ENCODE measurements at regions of chr12 and their contacts with region 1.

Region 1: DNA sequence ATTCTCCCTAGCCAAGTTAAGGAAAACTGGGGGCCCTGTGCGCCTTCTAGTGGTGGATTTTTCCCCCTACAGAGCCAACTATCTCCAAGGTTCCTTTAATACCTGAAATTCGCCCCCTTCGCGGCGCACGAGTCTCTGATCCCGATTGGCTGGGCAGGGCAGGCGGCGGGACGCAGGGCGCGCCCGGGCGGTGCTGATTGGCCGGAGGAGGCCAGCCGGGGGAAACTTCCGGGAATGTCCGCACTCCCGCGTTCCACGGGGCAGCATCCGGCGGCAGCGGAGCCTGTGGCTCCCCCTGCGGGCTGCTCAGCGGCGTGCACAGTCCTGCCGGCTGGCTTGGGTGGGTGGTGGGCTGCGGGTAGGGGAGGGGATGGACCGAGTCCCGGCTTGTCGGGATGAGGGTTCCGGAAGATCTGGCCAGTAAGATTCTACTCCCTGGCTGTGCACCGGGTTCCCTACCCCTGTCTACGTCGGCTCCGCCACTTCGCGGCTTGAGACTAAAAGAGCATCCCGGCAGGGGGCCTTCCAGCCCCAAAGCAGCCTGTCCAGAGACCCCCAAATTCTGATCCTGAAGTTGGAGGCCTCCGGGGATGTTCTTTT is at the start of gene NABP2:
- DNase-seq: peak; percentile 95 to 98
- H3K4me3 ChIP-seq: peak within 1 kb of the TSS; percentile 49 to 78 (median 66)
- H3K27ac ChIP-seq: peak within 1 kb of the TSS; percentile 59; the same call in 1 of the 2 replicates
- H3K4me1 ChIP-seq: peaks cover 3 to 13% (median 6%) of the 10 kb centered on the region in 4 experiments; a peak in 6 of 7 replicates
- H3K27me3 ChIP-seq: no peaks in the 10 kb centered on the region
- CTCF ChIP-seq: peak; percentile 70 to 79 (median 78)
- EP300 ChIP-seq: no peak
- POLR2A ChIP-seq: no peak
- RAD21 ChIP-seq: peak; percentile 39
- total RNA-seq, gene NABP2: 56.1 and 58.1 TPM in 2 replicates

Region 2: GRCh38 chr12:56127888-56128669 is 96.1 kb before region 1 on chr12 and contains the start of gene ESYT1:
- CTCF ChIA-PET with region 1: interaction called, 13 read pairs
- POLR2A ChIA-PET with region 1: interaction called, 21 read pairs
- DNase-seq: peak; percentile 97 to 100
- H3K4me3 ChIP-seq: peak within 1 kb of the TSS; percentile 79 to 95 (median 90)
- H3K27ac ChIP-seq: peak within 1 kb of the TSS; percentile 88
- H3K4me1 ChIP-seq: peaks cover 0 to 13% (median 5%) of the 10 kb centered on the region in 4 experiments; a peak in 5 of 7 replicates
- H3K27me3 ChIP-seq: no peaks in the 10 kb centered on the region
- CTCF ChIP-seq: no peak
- EP300 ChIP-seq: peak in 1 of 2 experiments; percentile 57; a peak in 1 of 3 replicates
- POLR2A ChIP-seq: peak; percentile 93 to 96
- RAD21 ChIP-seq: no peak; a peak in 1 of 4 replicates
- total RNA-seq, gene ESYT1: 85.1 and 86.9 TPM in 2 replicates

Region 3: GRCh38 chr12:56158029-56158925 is 65.9 kb before region 1 on chr12 and contains the start of gene MYL6:
- CTCF ChIA-PET with region 1: interaction called, 12 read pairs
- POLR2A ChIA-PET with region 1: interaction called, 58 read pairs
- DNase-seq: peak; percentile 88 to 91
- H3K4me3 ChIP-seq: peak within 1 kb of the TSS; percentile 63 to 97 (median 93)
- H3K27ac ChIP-seq: peak within 1 kb of the TSS; percentile 99
- H3K4me1 ChIP-seq: peaks cover 8 to 37% (median 22%) of the 10 kb centered on the region in 4 experiments
- H3K27me3 ChIP-seq: no peaks in the 10 kb centered on the region
- CTCF ChIP-seq: no peak
- EP300 ChIP-seq: peak in 1 of 2 experiments; percentile 75; a peak in 2 of 3 replicates
- POLR2A ChIP-seq: peak; percentile 98
- RAD21 ChIP-seq: no peak
- total RNA-seq, gene MYL6: 1,130 and 1,137 TPM in 2 replicates

Region 4: DNA sequence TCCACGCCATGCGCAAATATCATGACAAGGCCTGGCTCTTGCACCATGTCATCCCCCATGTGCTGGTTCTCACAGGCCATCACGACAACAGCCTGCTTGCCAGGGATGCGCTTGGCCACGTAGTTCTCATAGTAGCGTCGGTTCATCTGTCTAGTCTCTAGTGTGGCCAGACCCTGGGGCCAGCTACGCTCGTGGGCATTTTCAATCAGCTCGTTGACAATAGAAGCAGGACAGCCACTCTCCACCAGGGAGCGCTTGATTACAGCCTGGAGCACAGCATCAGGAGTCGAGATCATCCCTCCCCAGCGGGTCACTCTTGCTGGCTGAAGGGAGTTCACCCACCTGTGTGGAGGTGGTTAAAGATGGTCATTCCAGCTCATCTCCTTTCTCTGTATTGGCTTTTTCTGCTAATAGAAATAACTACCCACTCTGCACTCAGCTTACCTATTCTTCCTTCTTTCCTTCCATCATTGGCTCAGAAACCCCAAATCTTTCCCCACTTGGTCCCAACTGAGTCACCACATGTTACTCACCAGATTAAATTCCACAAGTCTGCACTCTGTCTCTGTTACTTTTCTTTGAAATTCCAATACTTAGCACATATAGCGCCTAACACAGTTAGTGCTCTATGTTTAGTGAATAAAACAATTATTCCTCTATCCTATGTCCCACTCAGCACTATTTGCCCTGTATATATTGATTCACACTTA is 17.6 kb before region 1 on chr12:
- CTCF ChIA-PET with region 1: interaction called, 89 read pairs
- POLR2A ChIA-PET with region 1: interaction called, 203 read pairs
- DNase-seq: peak in 1 of 2 experiments; percentile 84
- H3K4me3 ChIP-seq: no peak overlapping the region
- H3K27ac ChIP-seq: no peak overlapping the region
- H3K4me1 ChIP-seq: no peaks in the 10 kb centered on the region
- H3K27me3 ChIP-seq: no peaks in the 10 kb centered on the region
- CTCF ChIP-seq: peak; percentile 78 to 91 (median 85)
- EP300 ChIP-seq: no peak
- POLR2A ChIP-seq: 0 out of 3 replicates have a peak, but pooled peaks of 1 of the 2 experiments have one; percentile 5
- RAD21 ChIP-seq: peak; percentile 68 to 74

Region 5: DNA sequence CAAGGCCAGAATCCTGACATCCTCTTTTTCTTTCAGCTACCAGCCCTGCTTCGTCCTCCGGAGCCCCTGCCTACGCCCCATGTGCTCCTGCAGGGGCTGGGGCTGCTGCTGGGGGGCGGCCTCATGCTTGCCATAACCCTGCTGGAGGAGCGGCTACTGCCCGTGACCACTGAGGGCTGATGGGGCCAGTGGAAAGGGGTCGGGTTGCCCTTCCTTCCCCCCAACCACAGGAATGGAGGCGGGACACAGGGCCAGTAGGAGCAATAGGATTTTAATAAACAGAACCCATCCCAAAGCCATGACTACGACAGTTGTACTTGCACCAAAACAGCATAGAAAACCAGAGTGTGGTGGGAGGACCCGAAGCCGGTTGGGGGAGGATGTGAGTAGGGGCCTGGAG is 13.3 kb after region 1 on chr12:
- CTCF ChIA-PET with region 1: interaction called, 31 read pairs
- POLR2A ChIA-PET with region 1: interaction called, 41 read pairs
- DNase-seq: no peak
- H3K4me3 ChIP-seq: no peak overlapping the region
- H3K27ac ChIP-seq: no peak overlapping the region
- H3K4me1 ChIP-seq: peaks cover 0 to 4% (median 2%) of the 10 kb centered on the region in 4 experiments; a peak in 4 of 7 replicates
- H3K27me3 ChIP-seq: 0 out of 7 replicates have a peak, but pooled peaks cover 0 to 2% (median 0%) of the 10 kb centered on the region in 4 experiments
- CTCF ChIP-seq: no peak
- EP300 ChIP-seq: no peak
- POLR2A ChIP-seq: no peak
- RAD21 ChIP-seq: no peak

Region 6: GRCh38 chr12:56258057-56258819 is 34.0 kb after region 1 on chr12 and contains the start of gene ANKRD52:
- CTCF ChIA-PET with region 1: interaction called, 28 read pairs
- POLR2A ChIA-PET with region 1: interaction called, 41 read pairs
- DNase-seq: peak in 1 of 2 experiments; percentile 89
- H3K4me3 ChIP-seq: peak within 1 kb of the TSS; percentile 60 to 96 (median 88)
- H3K27ac ChIP-seq: no peak within 1 kb of the TSS
- H3K4me1 ChIP-seq: peaks cover 8 to 17% (median 13%) of the 10 kb centered on the region in 4 experiments
- H3K27me3 ChIP-seq: no peaks in the 10 kb centered on the region
- CTCF ChIP-seq: peak; percentile 67 to 97 (median 83)
- EP300 ChIP-seq: peak in 1 of 2 experiments; percentile 23; a peak in 1 of 3 replicates
- POLR2A ChIP-seq: peak in 1 of 2 experiments; percentile 28; a peak in 2 of 3 replicates
- RAD21 ChIP-seq: peak in 1 of 2 experiments; percentile 38; a peak in 2 of 4 replicates
- total RNA-seq, gene ANKRD52: 34.1 and 36.3 TPM in 2 replicates

Region 7: DNA sequence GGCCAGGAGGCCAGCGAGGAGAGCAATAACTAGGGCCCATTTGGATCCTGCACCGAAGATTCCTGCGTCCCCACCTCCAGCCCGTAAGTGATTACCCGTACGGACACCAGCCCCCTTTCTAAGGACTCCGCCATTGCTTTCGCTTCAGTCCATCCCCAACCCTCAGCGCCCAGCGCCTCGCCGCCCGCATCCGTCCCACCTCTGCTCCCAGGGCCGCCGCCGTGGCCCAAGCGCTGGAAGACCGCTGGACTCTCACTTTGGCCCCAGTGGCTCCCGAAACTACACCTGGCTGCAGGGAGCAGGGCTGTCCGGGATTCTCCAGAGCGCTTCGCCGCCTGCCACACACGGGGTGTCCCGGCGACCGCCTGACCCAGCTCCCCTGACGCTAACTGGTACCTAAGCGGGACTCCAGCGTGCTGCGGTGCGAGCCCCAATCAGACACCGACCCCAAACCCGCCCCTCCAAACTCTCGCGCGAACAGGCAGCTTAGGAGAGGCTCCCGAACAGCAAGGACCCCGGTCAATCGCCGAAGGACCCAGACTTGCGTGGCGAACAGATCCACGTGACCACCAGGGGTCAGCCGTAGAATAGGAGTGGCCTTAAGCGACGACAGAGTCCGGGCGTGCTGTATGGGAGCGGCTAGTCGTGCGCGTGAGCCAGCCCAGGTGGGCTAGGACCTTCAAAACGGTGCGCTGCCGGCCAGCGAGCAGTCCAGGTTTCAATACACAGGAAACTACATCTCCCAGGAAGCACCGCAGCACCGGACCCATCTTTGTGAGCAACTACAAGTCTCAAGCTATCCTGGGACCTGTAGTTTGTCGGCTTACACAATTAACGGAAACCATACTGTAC is 91.6 kb after region 1 on chr12 and contains the start of gene CNPY2:
- CTCF ChIA-PET with region 1: no interaction called
- POLR2A ChIA-PET with region 1: interaction called, 18 read pairs
- DNase-seq: peak; percentile 94 to 98
- H3K4me3 ChIP-seq: peak within 1 kb of the TSS; percentile 70 to 98 (median 96)
- H3K27ac ChIP-seq: peak within 1 kb of the TSS; percentile 86
- H3K4me1 ChIP-seq: peaks cover 0 to 6% (median 3%) of the 10 kb centered on the region in 4 experiments; a peak in 5 of 7 replicates
- H3K27me3 ChIP-seq: no peaks in the 10 kb centered on the region
- CTCF ChIP-seq: peak; percentile 20 to 44 (median 28)
- EP300 ChIP-seq: no peak
- POLR2A ChIP-seq: peak; percentile 84 to 97
- RAD21 ChIP-seq: peak; percentile 37 to 44; a peak in 3 of 4 replicates
- total RNA-seq, gene CNPY2: 195 and 203 TPM in 2 replicates

Region 8: DNA sequence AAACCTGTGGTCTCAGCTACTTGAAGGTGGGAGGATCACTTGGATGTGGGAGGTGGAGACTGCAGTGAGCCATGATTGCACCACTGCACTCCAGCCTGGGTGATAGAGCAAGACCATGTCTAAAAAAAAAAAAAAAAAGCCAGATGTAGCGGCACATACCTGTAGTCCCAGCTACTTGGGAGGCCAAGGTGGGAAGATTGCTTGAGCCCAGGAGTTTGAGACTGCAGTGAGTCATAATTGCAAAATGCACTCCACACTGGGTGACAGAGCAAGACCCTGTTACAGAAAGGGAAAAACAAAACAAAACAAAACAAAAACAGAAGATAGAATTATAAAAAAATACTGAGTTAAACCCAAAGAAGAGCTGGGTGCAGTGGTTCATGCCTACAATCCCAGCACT is 167.5 kb after region 1 on chr12:
- CTCF ChIA-PET with region 1: no interaction called
- POLR2A ChIA-PET with region 1: no interaction called
- DNase-seq: no peak
- H3K4me3 ChIP-seq: no peak overlapping the region
- H3K27ac ChIP-seq: no peak overlapping the region
- H3K4me1 ChIP-seq: peaks cover 0 to 3% (median 0%) of the 10 kb centered on the region in 4 experiments; a peak in 1 of 7 replicates
- H3K27me3 ChIP-seq: no peaks in the 10 kb centered on the region
- CTCF ChIP-seq: no peak
- EP300 ChIP-seq: no peak
- POLR2A ChIP-seq: no peak
- RAD21 ChIP-seq: no peak